Activated B cell treated with CpG ODN at 0.5 μM for 24 hours (primary cell): ENCODE measurements at regions of chr16 and their contacts with region 1.

Region 1: GRCh38 chr16:57994778-57995177 is 5.7 kb downstream of the ZNF319 start:
- DNase-seq: no peak
- ATAC-seq: peak; percentile 63
- H3K4me3 Mint-ChIP-seq: no peak overlapping the region
- H3K27ac Mint-ChIP-seq: no peak overlapping the region
- H3K4me1 Mint-ChIP-seq: peaks cover 24% of the 10 kb centered on the region
- H3K27me3 Mint-ChIP-seq: no peaks in the 10 kb centered on the region
- CTCF ChIP-seq: no peak

Region 2: GRCh38 chr16:57984331-57985203 is 10.2 kb before region 1 on chr16:
- CTCF ChIA-PET with region 1: interaction called, 3 read pairs
- POLR2A ChIA-PET with region 1: no interaction called
- intact Hi-C with region 1: loop called (anchors 1 kb)
- DNase-seq: peak; percentile 82
- ATAC-seq: peak; percentile 99
- H3K4me3 Mint-ChIP-seq: peak overlapping the region; percentile 91
- H3K27ac Mint-ChIP-seq: no peak overlapping the region
- H3K4me1 Mint-ChIP-seq: peaks cover 14% of the 10 kb centered on the region
- H3K27me3 Mint-ChIP-seq: peaks cover 4% of the 10 kb centered on the region
- CTCF ChIP-seq: no peak

Region 3: GRCh38 chr16:58110571-58111301 is 116.0 kb after region 1 on chr16:
- CTCF ChIA-PET with region 1: no interaction called
- POLR2A ChIA-PET with region 1: no interaction called
- intact Hi-C with region 1: no loop called
- DNase-seq: no peak
- ATAC-seq: no peak
- H3K4me3 Mint-ChIP-seq: no peak overlapping the region
- H3K27ac Mint-ChIP-seq: peak overlapping the region; percentile 31
- H3K4me1 Mint-ChIP-seq: peaks cover 12% of the 10 kb centered on the region
- H3K27me3 Mint-ChIP-seq: no peaks in the 10 kb centered on the region
- CTCF ChIP-seq: no peak

Region 4: GRCh38 chr16:58551496-58551895 is 556.7 kb after region 1 on chr16:
- CTCF ChIA-PET with region 1: no interaction called
- POLR2A ChIA-PET with region 1: no interaction called
- intact Hi-C with region 1: no loop called
- DNase-seq: no peak
- ATAC-seq: no peak
- H3K4me3 Mint-ChIP-seq: no peak overlapping the region
- H3K27ac Mint-ChIP-seq: no peak overlapping the region
- H3K4me1 Mint-ChIP-seq: no peaks in the 10 kb centered on the region
- H3K27me3 Mint-ChIP-seq: no peaks in the 10 kb centered on the region
- CTCF ChIP-seq: no peak